ENCODE measurements at regions of chr1 and their contacts with region 1.

Region 1: GRCh38 chr1:164558461-164559341 is at the start of gene PBX1:
- DNase-seq: peak; percentile 97 to 98
- H3K4me3 ChIP-seq: peak within 1 kb of the TSS; percentile 56 to 90 (median 79)
- H3K27ac ChIP-seq: peak within 1 kb of the TSS; percentile 91 to 92
- H3K4me1 ChIP-seq: no peaks in the 10 kb centered on the region
- H3K27me3 ChIP-seq: no peaks in the 10 kb centered on the region
- CTCF ChIP-seq: no peak
- POLR2A ChIP-seq: peak; percentile 73
- total RNA-seq, gene PBX1: 64.5 to 126 (median 95.4) TPM

Region 2: GRCh38 chr1:164611754-164612642 is 53.3 kb after region 1 on chr1:
- intact Hi-C with region 1: loop called (anchors 5 kb)
- DNase-seq: peak; percentile 64 to 82
- H3K4me3 ChIP-seq: peak overlapping the region in 1 of 3 donors; percentile 15
- H3K27ac ChIP-seq: peak overlapping the region; percentile 41 to 80
- H3K4me1 ChIP-seq: peaks cover 0 to 19% of the 10 kb centered on the region in 2 donors
- H3K27me3 ChIP-seq: no peaks in the 10 kb centered on the region
- CTCF ChIP-seq: no peak
- POLR2A ChIP-seq: no peak

Region 3: DNA sequence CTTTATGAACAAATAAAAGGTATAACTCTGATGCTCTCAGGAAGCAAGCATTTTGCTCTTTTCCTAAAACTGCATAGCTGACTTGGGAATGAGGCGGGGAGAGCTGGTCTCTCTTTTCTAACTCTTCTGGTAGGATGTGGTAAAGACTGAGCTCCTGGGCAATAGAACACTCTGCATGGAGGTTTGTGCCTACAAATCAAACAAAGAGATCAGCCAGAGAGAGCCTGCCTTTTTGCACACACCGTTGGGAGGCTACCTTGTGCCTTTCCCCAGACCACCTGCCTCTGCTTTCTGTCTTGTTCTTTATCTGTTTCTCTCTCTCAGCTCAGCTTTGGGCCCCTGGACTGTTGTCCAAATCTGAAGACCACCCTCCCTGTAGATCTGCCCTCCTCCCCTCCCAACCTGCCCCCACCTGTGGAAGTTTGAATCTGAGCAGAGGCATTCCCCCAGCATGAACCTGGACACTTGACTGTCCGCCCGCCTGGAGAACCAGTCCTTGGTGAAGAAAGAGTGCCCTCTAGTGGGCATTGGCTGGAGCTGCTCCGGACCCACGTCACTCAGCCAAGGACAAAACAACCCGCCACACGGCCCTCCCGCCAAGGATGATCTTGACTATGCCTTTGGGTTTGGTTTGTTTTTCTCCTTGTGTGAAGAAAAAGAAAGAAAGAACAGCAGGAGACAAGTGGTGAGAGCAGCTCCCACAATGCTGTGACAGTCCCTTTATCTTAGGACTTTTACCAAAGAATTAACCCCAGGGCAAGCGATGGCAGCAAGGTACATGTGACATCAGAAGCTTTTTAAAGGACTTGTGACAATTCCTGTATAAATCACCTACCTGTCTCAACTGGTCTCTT is 228.5 kb after region 1 on chr1:
- intact Hi-C with region 1: loop called (anchors 10 kb)
- DNase-seq: peak; percentile 80 to 87
- H3K4me3 ChIP-seq: peak overlapping the region in 1 of 3 donors; percentile 36
- H3K27ac ChIP-seq: peak overlapping the region; percentile 81 to 83
- H3K4me1 ChIP-seq: peaks cover 0 to 12% of the 10 kb centered on the region in 2 donors
- H3K27me3 ChIP-seq: no peaks in the 10 kb centered on the region
- CTCF ChIP-seq: peak; percentile 90 to 95 (median 93)
- POLR2A ChIP-seq: no peak